HCT116 (cell line): ENCODE measurements at regions of chr15 and their contacts with region 1.

Region 1: GRCh38 chr15:89874926-89875564 is 18.7 kb downstream of the AP3S2 start:
- DNase-seq: peak; percentile 43
- ATAC-seq: peak; percentile 100
- H3K4me3 ChIP-seq: no peak overlapping the region
- H3K27ac ChIP-seq: no peak overlapping the region
- H3K4me1 ChIP-seq: no peaks in the 10 kb centered on the region
- H3K27me3 ChIP-seq: no peaks in the 10 kb centered on the region
- CTCF ChIP-seq: peak; percentile 93 to 97 (median 96)
- POLR2A ChIP-seq: no peak
- RAD21 ChIP-seq: peak; percentile 88

Region 2: GRCh38 chr15:89839167-89839810 is 35.8 kb before region 1 on chr15:
- CTCF ChIA-PET with region 1: no interaction called
- POLR2A ChIA-PET with region 1: no interaction called
- RAD21 ChIA-PET with region 1: no interaction called
- intact Hi-C with region 1: no loop called
- DNase-seq: no peak
- ATAC-seq: no peak
- H3K4me3 ChIP-seq: no peak overlapping the region
- H3K27ac ChIP-seq: no peak overlapping the region
- H3K4me1 ChIP-seq: peaks cover 2 to 20% of the 10 kb centered on the region in 2 experiments; a peak in 2 of 4 replicates
- H3K27me3 ChIP-seq: no peaks in the 10 kb centered on the region
- CTCF ChIP-seq: no peak
- POLR2A ChIP-seq: no peak
- RAD21 ChIP-seq: no peak

Region 3: DNA sequence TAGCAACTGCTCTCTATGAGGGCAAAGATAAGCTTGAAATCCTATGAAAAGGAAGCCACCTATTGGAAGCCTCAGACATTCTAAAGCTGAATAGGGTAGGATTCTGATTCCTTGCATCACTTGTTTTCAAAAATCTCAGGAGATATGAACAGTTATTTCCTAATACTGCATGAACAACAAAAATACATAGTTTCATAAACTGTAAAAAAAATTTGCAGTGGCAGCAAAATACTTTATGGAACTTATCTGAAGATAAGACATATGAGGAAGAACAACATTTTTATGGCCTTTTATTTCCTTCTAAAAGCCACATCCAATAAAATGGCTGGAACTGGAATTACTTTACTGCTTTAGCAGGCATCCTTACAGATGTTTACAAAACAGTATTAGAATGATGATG is 11.1 kb before region 1 on chr15:
- CTCF ChIA-PET with region 1: interaction called, 15 read pairs
- POLR2A ChIA-PET with region 1: no interaction called
- RAD21 ChIA-PET with region 1: no interaction called
- intact Hi-C with region 1: no loop called
- DNase-seq: no peak
- ATAC-seq: no peak
- H3K4me3 ChIP-seq: no peak overlapping the region
- H3K27ac ChIP-seq: no peak overlapping the region
- H3K4me1 ChIP-seq: no peaks in the 10 kb centered on the region
- H3K27me3 ChIP-seq: no peaks in the 10 kb centered on the region
- CTCF ChIP-seq: no peak
- POLR2A ChIP-seq: no peak
- RAD21 ChIP-seq: 0 out of 2 replicates have a peak, but pooled peaks have one; percentile 16

Region 4: DNA sequence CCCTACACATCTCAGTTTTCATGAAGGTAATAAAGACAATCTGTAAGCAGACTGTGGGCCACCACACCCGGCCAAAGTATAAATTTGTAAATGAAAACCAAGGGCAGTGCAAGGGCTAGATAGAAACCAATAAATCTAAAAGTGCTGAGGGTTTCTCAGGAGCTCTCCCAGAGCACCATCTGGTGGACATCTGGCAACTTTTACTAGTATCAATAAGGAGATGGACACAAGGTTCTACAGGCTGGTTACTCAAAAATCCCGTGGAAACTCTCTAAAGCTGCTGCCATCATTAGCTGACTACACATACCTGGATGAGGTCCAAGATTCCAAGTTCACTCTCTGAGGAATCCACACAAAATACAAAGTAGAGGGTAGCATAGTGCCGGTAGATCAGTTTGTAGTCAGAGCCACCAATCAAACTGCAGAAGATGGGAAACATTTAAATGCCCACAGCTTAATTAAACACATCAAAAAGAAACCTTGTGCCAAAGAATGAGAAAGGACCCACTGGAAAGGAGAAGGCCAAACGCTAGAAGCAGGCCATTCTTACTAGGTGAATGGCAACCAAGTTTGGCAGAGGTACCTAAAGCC is 13.3 kb after region 1 on chr15:
- CTCF ChIA-PET with region 1: interaction called, 35 read pairs
- POLR2A ChIA-PET with region 1: no interaction called
- RAD21 ChIA-PET with region 1: no interaction called
- intact Hi-C with region 1: no loop called
- DNase-seq: peak; percentile 48
- ATAC-seq: peak; percentile 77
- H3K4me3 ChIP-seq: no peak overlapping the region
- H3K27ac ChIP-seq: no peak overlapping the region
- H3K4me1 ChIP-seq: peaks cover 0 to 5% of the 10 kb centered on the region in 2 experiments; a peak in 1 of 4 replicates
- H3K27me3 ChIP-seq: no peaks in the 10 kb centered on the region
- CTCF ChIP-seq: peak; percentile 57 to 73 (median 61)
- POLR2A ChIP-seq: no peak
- RAD21 ChIP-seq: peak; percentile 82

Region 5: GRCh38 chr15:90233376-90234095 is 358.5 kb after region 1 on chr15 and contains the start of gene CIB1:
- CTCF ChIA-PET with region 1: no interaction called
- POLR2A ChIA-PET with region 1: no interaction called
- RAD21 ChIA-PET with region 1: no interaction called
- intact Hi-C with region 1: no loop called
- DNase-seq: peak; percentile 92
- ATAC-seq: peak; percentile 93
- H3K4me3 ChIP-seq: peak within 1 kb of the TSS; percentile 67 to 87
- H3K27ac ChIP-seq: peak within 1 kb of the TSS; percentile 69
- H3K4me1 ChIP-seq: peaks cover 9 to 49% of the 10 kb centered on the region in 2 experiments; a peak in 3 of 4 replicates
- H3K27me3 ChIP-seq: no peaks in the 10 kb centered on the region
- CTCF ChIP-seq: peak in 2 of 3 experiments; percentile 34 to 37; a peak in 2 of 6 replicates
- POLR2A ChIP-seq: no peak
- RAD21 ChIP-seq: no peak
- total RNA-seq, gene CIB1: 92.7 TPM